Activated B cell treated with CpG ODN at 0.5 μM for 24 hours (primary cell): ENCODE measurements at regions of chr14 and their contacts with region 1.

Region 1: DNA sequence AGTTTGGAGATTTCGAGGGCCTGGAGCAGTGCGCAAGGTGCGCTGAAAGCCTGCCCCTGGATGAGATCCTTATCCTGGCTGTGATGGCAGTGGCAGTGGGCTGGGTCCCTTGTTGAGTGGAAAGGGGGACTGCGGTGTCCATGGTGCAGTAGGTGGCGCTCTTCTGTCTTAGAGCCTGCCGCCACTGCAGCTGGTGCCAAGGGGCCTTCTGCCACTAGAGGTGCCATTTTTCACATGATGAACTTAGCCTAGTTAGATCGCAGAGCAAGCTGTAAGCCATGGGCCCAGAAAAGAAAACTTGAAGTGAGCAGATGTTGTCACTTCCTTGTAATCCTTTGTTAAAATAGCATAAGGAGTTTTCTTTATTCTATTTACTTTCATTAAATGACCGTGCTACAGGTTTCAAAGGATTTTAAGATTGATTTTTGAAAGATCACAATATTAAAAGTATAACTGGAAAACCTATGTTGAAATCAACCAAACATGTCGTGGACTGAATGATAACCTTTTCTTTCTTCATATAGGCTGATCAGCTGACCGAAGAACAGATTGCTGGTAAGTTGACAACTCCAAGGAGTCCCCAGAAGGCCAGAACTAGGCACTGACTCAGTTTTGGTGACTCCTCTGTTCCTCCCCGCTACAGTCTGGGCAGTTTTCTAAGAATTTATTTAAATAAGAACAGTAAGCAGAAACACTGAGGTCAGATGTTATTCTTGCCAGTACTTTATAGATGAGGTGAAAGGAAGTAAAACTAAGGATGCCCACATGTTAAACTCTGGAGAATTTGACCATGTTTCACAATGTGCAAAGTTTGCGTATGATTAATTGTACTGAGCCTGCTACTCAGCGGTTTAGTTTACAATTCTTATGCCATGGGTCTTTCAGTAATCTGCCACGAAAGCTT is 3.0 kb downstream of the CALM1 start:
- DNase-seq: peak; percentile 63
- ATAC-seq: peak; percentile 46
- H3K4me3 Mint-ChIP-seq: peak overlapping the region; percentile 91
- H3K27ac Mint-ChIP-seq: peak overlapping the region; percentile 98
- H3K4me1 Mint-ChIP-seq: peaks cover 47% of the 10 kb centered on the region
- H3K27me3 Mint-ChIP-seq: no peaks in the 10 kb centered on the region
- CTCF ChIP-seq: peak; percentile 78

Region 2: GRCh38 chr14:89954070-89955028 is 445.4 kb before region 1 on chr14 and contains the start of gene EFCAB11:
- CTCF ChIA-PET with region 1: no interaction called
- POLR2A ChIA-PET with region 1: interaction called, 14 read pairs
- intact Hi-C with region 1: loop called (anchors 1 kb)
- DNase-seq: peak; percentile 85
- ATAC-seq: peak; percentile 83
- H3K4me3 Mint-ChIP-seq: peak within 1 kb of the TSS; percentile 99
- H3K27ac Mint-ChIP-seq: peak within 1 kb of the TSS; percentile 95
- H3K4me1 Mint-ChIP-seq: peaks cover 32% of the 10 kb centered on the region
- H3K27me3 Mint-ChIP-seq: no peaks in the 10 kb centered on the region
- CTCF ChIP-seq: no peak
- total RNA-seq, gene EFCAB11: 7.5 and 10.0 TPM in 2 replicates

Region 3: GRCh38 chr14:90331497-90332435 is 68.0 kb before region 1 on chr14 and contains the start of gene NRDE2:
- CTCF ChIA-PET with region 1: interaction called, 3 read pairs
- POLR2A ChIA-PET with region 1: interaction called, 25 read pairs
- intact Hi-C with region 1: loop called (anchors 1 kb)
- DNase-seq: peak; percentile 95
- ATAC-seq: peak; percentile 98
- H3K4me3 Mint-ChIP-seq: peak within 1 kb of the TSS; percentile 93
- H3K27ac Mint-ChIP-seq: peak within 1 kb of the TSS; percentile 95
- H3K4me1 Mint-ChIP-seq: peaks cover 25% of the 10 kb centered on the region
- H3K27me3 Mint-ChIP-seq: peaks cover 19% of the 10 kb centered on the region
- CTCF ChIP-seq: no peak
- total RNA-seq, gene NRDE2: 35.3 and 37.1 TPM in 2 replicates

Region 4: GRCh38 chr14:90355540-90356518 is 44.0 kb before region 1 on chr14:
- CTCF ChIA-PET with region 1: no interaction called
- POLR2A ChIA-PET with region 1: no interaction called
- intact Hi-C with region 1: no loop called
- DNase-seq: no peak
- ATAC-seq: no peak
- H3K4me3 Mint-ChIP-seq: no peak overlapping the region
- H3K27ac Mint-ChIP-seq: no peak overlapping the region
- H3K4me1 Mint-ChIP-seq: no peaks in the 10 kb centered on the region
- H3K27me3 Mint-ChIP-seq: peaks cover 9% of the 10 kb centered on the region
- CTCF ChIP-seq: no peak

Region 5: DNA sequence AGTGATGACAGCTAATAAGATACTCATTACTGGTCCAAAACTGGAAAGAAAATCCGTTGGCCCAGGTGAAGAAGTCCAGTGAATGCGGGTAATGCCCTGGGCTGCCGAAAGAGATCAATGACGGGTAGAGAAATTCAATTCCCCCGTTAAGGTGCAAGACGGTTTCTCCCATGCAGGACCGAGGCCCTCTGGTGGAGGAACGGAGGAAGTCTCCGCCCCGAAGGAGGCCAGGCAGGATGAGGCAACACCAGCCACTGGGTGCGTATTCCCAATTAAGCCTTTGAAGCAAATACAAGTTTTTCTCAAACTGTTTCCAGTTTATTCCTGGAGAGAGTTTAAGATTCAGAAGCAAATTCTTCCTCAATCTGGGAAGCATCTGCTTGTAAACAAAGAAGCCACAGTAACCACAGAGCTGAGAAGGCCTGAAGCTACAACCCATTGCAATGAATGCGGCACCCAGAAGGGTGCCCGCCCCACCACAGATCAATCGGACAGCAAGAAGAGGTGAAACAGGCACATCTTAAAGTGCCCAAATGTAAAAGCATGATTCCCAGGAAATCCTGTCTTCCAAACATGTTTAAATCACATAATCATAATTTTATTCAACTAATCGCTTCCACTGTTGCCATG is 297.9 kb after region 1 on chr14:
- CTCF ChIA-PET with region 1: interaction called, 28 read pairs
- POLR2A ChIA-PET with region 1: interaction called, 5 read pairs
- intact Hi-C with region 1: loop called (anchors 1 kb)
- DNase-seq: peak; percentile 37
- ATAC-seq: peak; percentile 75
- H3K4me3 Mint-ChIP-seq: no peak overlapping the region
- H3K27ac Mint-ChIP-seq: no peak overlapping the region
- H3K4me1 Mint-ChIP-seq: peaks cover 4% of the 10 kb centered on the region
- H3K27me3 Mint-ChIP-seq: peaks cover under 1% of the 10 kb centered on the region
- CTCF ChIP-seq: peak; percentile 76

Region 6: GRCh38 chr14:91060351-91061055 is 660.7 kb after region 1 on chr14 and contains the start of gene RPS6KA5:
- CTCF ChIA-PET with region 1: no interaction called
- POLR2A ChIA-PET with region 1: interaction called, 3 read pairs
- intact Hi-C with region 1: loop called (anchors 2 kb)
- DNase-seq: peak; percentile 95
- ATAC-seq: peak; percentile 82
- H3K4me3 Mint-ChIP-seq: peak within 1 kb of the TSS; percentile 87
- H3K27ac Mint-ChIP-seq: peak within 1 kb of the TSS; percentile 78
- H3K4me1 Mint-ChIP-seq: peaks cover 41% of the 10 kb centered on the region
- H3K27me3 Mint-ChIP-seq: no peaks in the 10 kb centered on the region
- CTCF ChIP-seq: no peak
- total RNA-seq, gene RPS6KA5: 13.3 and 16.3 TPM in 2 replicates

Region 7: DNA sequence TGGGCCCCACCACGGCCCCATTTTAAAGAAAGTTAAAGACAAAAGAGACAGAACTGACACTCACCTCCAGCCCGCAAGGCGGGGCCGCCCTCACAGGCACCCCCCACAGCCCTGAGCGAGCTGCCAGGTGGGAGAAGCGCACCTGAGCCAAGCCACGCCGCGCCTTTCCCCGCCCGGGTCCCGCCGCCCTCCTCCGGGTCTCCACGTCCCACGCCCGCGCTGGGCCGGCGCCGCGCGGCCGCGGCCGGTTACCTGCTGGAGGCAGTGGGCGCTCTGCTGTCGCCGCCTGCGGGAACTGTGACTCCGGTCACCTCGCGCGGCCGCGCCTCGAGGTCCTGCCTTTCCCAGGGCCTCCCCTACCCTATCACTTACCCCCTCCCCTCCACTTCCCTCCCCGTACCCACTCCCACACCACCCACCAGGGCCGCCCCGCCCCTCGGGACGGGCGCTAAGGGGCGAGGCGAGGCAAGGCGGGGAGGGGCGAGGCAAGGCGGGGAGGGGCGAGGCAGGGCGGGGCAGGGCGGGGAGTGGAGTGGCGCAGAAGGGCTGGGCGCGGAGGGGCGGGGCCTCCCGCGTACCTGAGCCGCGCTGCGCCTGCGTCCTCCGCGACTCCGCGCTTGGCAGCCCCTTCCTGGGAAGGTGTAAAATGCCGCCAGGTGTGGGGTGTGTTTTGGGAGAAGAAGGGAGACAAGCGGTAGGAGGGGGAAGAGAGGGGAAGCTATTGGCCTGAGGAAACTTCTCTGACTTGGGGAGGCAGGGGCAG is 1436.5 kb after region 1 on chr14:
- CTCF ChIA-PET with region 1: no interaction called
- POLR2A ChIA-PET with region 1: no interaction called
- intact Hi-C with region 1: loop called (anchors 5 kb)
- DNase-seq: peak; percentile 68
- ATAC-seq: peak; percentile 94
- H3K4me3 Mint-ChIP-seq: peak overlapping the region; percentile 89
- H3K27ac Mint-ChIP-seq: peak overlapping the region; percentile 78
- H3K4me1 Mint-ChIP-seq: peaks cover 53% of the 10 kb centered on the region
- H3K27me3 Mint-ChIP-seq: peaks cover 5% of the 10 kb centered on the region
- CTCF ChIP-seq: no peak